Vagina (tissue), 2 donors: ENCODE measurements at regions of chr1 and their contacts with region 1.

Region 1: DNA sequence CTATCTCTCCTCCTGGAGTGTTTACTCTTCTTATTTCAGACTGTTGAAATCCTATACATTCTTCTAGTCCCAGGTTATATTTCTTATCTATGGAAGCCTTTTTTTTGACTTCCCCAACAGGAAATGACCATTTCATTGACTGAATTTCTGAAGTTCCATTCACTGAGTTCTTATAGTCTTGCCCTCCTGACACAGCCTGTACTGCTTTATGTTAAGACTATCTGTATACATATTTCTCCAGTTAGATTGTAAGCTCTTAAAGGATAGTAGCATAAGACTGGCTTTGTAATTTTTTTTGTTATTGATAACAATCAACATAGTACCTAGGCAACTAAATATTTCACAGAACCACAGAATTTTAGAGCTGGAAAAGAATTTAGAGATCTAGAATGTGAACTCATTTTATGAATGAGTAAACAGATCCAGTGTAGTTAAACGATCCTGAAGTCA is 14.9 kb upstream of the MACF1 start:
- DNase-seq: no peak
- H3K4me3 ChIP-seq: no peak overlapping the region
- H3K27ac ChIP-seq: peak overlapping the region; percentile 13
- H3K4me1 ChIP-seq: peaks cover 46% of the 10 kb centered on the region
- H3K27me3 ChIP-seq: no peaks in the 10 kb centered on the region
- CTCF ChIP-seq: no peak
- POLR2A ChIP-seq: no peak

Region 2: GRCh38 chr1:39102537-39103327 is 86.9 kb before region 1 on chr1:
- intact Hi-C with region 1: loop called (anchors 5 kb)
- DNase-seq: no peak
- H3K4me3 ChIP-seq: no peak overlapping the region
- H3K27ac ChIP-seq: peak overlapping the region; percentile 96
- H3K4me1 ChIP-seq: peaks cover 51% of the 10 kb centered on the region
- H3K27me3 ChIP-seq: no peaks in the 10 kb centered on the region
- CTCF ChIP-seq: peak; percentile 75 to 94 (median 88)
- POLR2A ChIP-seq: no peak